Dorsolateral prefrontal cortex (tissue), 120 donors: ENCODE measurements at regions of chr18 and their contacts with region 1.

Region 1: GRCh38 chr18:74495581-74496507 is at the start of gene CNDP2:
- DNase-seq: peak; percentile 99 to 100 (median 99)
- H3K4me3 ChIP-seq: peak within 1 kb of the TSS; percentile 68 to 98 (median 92)
- H3K27ac ChIP-seq: peak within 1 kb of the TSS; percentile 24 to 98 (median 92)
- H3K27me3 ChIP-seq: no peaks in the 10 kb centered on the region
- CTCF ChIP-seq: peak in 9 of 56 donors; percentile 3 to 38 (median 10)
- total RNA-seq, gene CNDP2: 146 to 408 (median 218) TPM

Region 2: DNA sequence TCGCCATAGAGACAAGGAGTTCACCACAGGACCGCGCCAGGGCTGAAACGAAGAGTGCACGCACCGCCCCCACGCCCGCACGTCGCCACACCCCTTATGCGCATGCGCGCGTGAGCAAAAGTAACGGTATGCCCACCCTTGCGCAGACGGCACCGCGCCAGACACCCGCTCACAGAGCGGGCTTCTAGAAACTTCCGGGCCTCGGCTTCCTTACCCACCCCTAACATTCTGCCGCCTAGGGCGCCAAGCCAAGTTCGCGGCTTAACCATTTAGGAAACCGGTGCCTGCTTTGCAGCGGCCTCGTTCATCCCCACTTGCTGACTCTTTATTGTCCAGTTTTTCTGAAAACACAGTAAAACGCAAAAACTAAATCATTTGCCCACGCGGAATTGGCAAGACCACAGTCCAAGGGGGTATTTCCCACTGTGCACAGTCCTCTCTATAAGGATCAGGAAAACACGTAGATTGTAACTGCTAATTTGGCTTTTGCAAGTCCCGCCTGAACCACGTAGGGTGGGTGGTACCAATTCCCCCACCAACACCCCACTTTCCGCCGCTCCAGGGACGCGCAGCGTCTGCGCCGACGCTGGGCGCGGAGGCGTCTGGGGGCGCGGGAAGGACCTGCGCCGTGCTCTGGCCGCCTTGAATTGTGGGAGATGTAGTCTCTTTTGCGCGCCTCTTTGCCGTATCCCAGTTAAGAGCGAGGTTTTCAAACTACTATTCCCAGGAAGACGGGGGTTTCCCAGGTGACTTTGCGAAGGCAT is 347.9 kb before region 1 on chr18 and contains the starts of genes FBXO15 and TIMM21:
- intact Hi-C with region 1: loop called in 1 of 2 experiments (anchors 10 kb)
- DNase-seq: peak; percentile 94 to 96 (median 96)
- H3K4me3 ChIP-seq: peak within 1 kb of the TSS; percentile 53 to 100 (median 88)
- H3K27ac ChIP-seq: peak within 1 kb of the TSS; percentile 91 to 100 (median 99)
- H3K27me3 ChIP-seq: no peaks in the 10 kb centered on the region
- CTCF ChIP-seq: peak in 19 of 56 donors; percentile 1 to 50 (median 18)
- total RNA-seq, gene FBXO15: 2.4 to 9.5 (median 5.9) TPM
- total RNA-seq, gene TIMM21: 24.5 to 64.1 (median 41.0) TPM

Region 3: DNA sequence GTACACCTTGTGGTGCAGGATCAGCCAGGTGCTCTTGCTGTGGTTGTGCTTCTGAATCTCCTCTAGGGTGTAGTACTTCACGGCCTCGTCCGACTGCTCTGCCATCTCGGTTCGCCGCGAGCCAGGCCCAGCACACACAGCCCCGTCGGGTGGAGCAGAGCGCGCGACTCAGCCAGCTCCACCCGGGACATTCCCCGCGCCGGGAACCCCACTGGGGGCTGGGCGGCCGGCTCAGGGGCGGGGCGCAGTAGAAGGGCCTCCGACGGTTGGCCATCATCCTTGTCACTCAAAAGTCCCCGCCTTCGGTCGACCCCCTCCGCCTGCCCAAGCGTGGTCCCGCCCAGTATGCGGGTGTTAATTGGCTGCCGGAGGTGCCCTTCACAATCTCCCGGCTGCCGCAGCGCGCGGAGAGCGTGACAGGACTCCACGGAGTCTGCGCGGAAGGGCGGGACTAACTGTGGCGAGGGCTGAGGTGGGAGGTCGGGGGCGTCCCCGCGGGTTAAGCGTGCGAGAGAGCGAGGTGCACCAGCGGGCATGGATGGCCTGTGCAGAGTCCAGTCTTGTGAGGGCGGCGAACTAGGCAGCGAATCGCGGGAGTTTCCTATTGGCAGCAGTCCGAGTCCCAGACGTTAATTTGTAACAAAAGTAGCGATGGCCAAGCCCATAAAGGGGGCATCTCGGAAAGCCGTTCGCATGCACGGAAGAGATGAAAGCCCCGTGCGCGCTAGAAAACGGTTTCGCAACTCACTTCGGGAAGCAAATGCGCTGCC is 203.9 kb before region 1 on chr18 and contains the start of gene CYB5A:
- intact Hi-C with region 1: loop called (anchors 2 to 5 kb)
- DNase-seq: peak; percentile 98 to 100 (median 99)
- H3K4me3 ChIP-seq: peak within 1 kb of the TSS; percentile 65 to 100 (median 92)
- H3K27ac ChIP-seq: peak within 1 kb of the TSS in 55 of 59 donors; percentile 3 to 87 (median 73)
- H3K27me3 ChIP-seq: no peaks in the 10 kb centered on the region
- CTCF ChIP-seq: peak in 7 of 56 donors; percentile 2 to 38 (median 13)
- total RNA-seq, gene CYB5A: 20.0 to 49.0 (median 31.9) TPM

Region 4: DNA sequence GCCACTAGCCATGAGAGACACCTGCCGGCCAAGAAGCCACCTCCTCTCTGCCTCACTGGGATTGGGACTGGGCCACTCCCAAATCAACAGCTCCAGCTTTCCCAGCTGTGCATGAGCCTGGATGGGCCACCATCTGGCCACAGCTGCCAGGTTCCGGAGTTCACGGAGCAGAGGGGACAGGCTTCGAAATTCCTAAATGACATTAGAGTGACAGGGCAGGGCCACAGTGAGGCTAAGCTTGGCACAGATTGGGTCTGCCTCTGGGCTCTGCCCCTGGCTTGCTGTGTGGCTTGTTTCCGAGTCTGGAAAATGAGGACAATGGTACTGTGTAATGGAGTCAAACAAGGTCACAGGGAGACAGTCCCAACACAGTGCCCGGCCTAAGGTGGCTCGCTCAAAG is 45.2 kb before region 1 on chr18:
- intact Hi-C with region 1: loop called (anchors 5 kb)
- DNase-seq: peak in 6 of 10 donors; percentile 42 to 70 (median 60)
- H3K4me3 ChIP-seq: peak overlapping the region in 5 of 59 donors; percentile 17 to 26 (median 19)
- H3K27ac ChIP-seq: peak overlapping the region in 16 of 59 donors; percentile 3 to 59 (median 35)
- H3K27me3 ChIP-seq: peaks cover 0 to 3% (median 0%) of the 10 kb centered on the region in 45 donors
- CTCF ChIP-seq: peak in 4 of 56 donors; percentile 5 to 17 (median 12)

Region 5: DNA sequence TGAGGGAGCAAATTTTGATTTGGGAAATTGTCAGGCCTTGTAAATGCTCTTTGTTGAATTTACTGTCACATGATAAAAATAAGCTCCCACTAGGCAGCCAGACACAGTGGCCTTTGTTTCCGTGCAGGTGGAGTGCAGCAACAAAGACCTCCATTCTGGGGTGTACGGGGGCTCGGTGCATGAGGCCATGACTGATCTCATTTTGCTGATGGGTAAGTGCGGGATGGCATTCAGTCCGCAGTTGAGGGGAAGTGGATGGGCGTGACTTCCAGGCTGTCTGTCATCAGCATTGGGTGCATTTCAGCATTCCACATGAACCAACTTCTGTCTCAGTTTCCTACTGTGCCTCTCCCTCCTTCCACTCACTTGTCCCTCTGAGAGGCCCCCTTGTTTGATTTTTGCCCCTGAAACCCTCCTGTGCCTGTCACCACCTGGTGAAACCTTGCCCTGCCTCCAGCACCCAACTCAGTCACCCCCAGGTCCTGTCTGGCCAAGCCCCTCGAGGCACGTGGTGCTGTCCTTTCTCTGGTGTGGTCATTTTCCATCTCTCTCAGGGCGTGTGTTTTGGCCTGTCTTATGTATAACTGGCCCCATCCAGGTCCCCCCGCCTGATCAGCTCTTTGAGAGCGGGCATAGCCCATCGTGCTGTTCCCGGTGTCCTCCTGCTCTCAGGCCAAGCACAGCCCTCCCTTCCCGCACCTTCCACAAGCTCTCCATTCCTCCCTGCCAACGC is 16.6 kb after region 1 on chr18:
- intact Hi-C with region 1: loop called in 1 of 2 experiments (anchors 1 kb)
- DNase-seq: peak in 9 of 10 donors; percentile 72 to 95 (median 89)
- H3K4me3 ChIP-seq: peak overlapping the region in 4 of 59 donors; percentile 3 to 27 (median 23)
- H3K27ac ChIP-seq: peak overlapping the region; percentile 70 to 100 (median 96)
- H3K27me3 ChIP-seq: no peaks in the 10 kb centered on the region
- CTCF ChIP-seq: peak in 1 of 56 donors; percentile 19

Region 6: DNA sequence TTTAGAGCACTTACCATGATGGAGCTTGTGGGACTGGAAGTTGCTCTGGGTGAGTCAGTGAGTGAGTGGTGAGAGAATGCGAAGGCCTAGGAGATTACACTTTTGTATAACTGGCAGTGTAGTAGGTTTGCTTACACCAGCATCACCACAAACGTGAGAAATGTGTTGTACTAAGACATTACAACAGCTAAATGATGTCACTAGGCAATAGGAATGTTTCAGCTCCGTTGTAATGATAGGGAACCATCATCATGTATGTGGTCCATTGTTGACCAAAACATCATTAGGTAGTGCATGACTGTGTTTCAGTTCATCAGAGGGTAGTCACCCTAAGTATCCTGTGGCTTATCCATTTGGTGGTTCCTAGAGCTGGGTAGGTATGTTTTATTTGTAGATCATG is 113.7 kb after region 1 on chr18:
- intact Hi-C with region 1: no loop called
- DNase-seq: no peak
- H3K4me3 ChIP-seq: no peak overlapping the region
- H3K27ac ChIP-seq: no peak overlapping the region
- H3K27me3 ChIP-seq: no peaks in the 10 kb centered on the region
- CTCF ChIP-seq: no peak